OCI-LY7 (cell line): ENCODE measurements at regions of chr11 and their contacts with region 1.

Region 1: DNA sequence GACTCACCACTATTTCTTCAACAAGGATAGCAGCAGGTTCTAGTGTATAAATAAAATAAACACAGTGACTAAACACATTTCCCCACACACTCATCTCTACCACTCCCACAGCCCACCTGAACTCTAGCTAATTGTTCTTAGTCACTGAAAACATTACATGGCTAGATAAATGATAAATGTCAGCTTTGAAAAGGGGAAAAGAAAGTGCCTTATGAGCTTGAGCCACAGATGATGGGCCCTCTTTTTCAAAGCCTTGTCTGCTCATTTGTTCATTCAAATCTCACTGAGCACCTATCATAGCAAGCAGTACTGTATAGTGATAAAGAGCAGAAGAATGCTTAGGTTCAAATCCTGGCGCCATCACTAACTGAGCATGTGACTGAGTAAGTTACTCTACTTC is 58.3 kb downstream of the SIK3 start:
- DNase-seq: peak; percentile 18
- H3K4me3 ChIP-seq: no peak overlapping the region
- H3K27ac ChIP-seq: no peak overlapping the region
- H3K4me1 ChIP-seq: peaks cover 45% of the 10 kb centered on the region
- CTCF ChIP-seq: no peak

Region 2: DNA sequence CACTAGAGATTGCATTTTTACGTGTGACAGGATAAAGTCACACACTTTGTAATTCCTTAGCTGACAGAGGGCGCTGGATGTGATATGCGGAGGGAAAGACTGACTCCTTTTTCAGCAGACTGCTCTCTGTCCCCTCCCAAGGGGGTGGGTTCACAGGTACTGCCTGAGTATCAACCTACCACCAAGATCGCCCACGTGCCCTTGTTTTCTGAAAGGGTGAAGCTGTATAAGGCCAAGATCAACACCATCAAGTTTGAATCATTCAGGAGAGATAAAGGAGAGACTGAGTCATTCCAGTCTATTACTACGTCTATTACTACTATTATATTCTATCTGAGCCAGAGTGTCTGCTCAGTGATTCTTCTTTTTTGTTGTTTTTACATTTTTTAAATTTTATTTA is 297.8 kb before region 1 on chr11:
- CTCF ChIA-PET with region 1: no interaction called
- POLR2A ChIA-PET with region 1: no interaction called
- intact Hi-C with region 1: no loop called
- DNase-seq: no peak
- H3K4me3 ChIP-seq: no peak overlapping the region
- H3K27ac ChIP-seq: no peak overlapping the region
- H3K4me1 ChIP-seq: peaks cover 9% of the 10 kb centered on the region
- CTCF ChIP-seq: no peak

Region 3: DNA sequence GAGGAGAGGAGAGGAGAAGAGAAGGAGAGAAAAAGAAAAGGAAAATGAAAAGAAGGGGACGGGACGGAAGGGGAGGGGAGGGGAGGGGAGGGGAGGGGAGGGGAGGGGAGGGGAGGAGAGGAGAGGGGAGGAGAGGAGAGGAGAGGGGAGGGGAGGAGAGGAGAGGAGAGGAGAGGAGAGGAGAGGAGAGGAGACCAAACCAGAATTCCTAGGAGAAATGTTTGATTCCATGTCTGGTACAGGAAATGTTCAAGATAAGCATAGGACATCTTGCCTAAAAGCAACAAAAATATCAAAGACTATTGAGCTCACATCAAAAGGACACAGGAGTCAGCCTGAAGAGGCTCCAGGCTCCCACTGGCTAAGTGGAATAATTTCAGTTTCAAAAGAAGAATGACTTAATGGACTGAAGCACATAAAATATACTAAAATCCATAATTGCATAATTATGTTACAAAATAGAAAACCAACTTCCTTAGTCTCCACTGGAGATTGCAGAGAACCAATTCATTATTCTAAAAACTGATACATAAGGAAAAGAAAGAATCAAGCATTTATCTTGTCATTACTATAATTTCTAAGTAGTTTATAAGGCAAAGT is 101.3 kb before region 1 on chr11:
- CTCF ChIA-PET with region 1: no interaction called
- POLR2A ChIA-PET with region 1: no interaction called
- intact Hi-C with region 1: no loop called
- DNase-seq: no peak
- H3K4me3 ChIP-seq: no peak overlapping the region
- H3K27ac ChIP-seq: no peak overlapping the region
- H3K4me1 ChIP-seq: no peaks in the 10 kb centered on the region
- CTCF ChIP-seq: no peak

Region 4: GRCh38 chr11:117052196-117053149 is 12.6 kb after region 1 on chr11:
- CTCF ChIA-PET with region 1: no interaction called
- POLR2A ChIA-PET with region 1: interaction called, 18 read pairs
- intact Hi-C with region 1: no loop called
- DNase-seq: no peak
- H3K4me3 ChIP-seq: no peak overlapping the region
- H3K27ac ChIP-seq: no peak overlapping the region
- H3K4me1 ChIP-seq: no peaks in the 10 kb centered on the region
- CTCF ChIP-seq: no peak

Region 5: DNA sequence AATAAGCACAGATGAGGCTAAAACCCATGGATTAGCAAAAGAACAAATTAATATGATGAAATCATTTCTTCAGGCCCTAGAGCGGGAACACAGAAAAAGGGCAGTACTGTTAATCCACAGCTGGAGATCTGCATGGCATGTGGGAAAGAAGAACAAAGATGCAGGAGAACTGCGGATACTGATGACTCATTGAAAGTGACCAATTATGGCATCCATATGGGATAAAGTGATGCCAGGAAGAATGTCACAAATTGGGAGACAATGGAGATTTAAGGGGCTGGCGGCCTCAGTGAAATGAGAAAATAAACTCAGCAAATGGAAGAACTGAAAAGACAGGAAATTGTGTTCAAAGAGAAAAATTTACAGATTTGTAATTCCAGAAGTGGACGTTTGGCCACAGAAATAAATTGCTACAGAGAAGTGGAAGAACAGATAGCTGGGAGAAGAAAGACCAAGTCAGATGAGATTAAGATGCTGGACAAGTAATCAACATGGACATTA is 18.9 kb after region 1 on chr11:
- CTCF ChIA-PET with region 1: interaction called, 4 read pairs
- POLR2A ChIA-PET with region 1: interaction called, 11 read pairs
- intact Hi-C with region 1: no loop called
- DNase-seq: no peak
- H3K4me3 ChIP-seq: no peak overlapping the region
- H3K27ac ChIP-seq: no peak overlapping the region
- H3K4me1 ChIP-seq: peaks cover 16% of the 10 kb centered on the region
- CTCF ChIP-seq: no peak

Region 6: DNA sequence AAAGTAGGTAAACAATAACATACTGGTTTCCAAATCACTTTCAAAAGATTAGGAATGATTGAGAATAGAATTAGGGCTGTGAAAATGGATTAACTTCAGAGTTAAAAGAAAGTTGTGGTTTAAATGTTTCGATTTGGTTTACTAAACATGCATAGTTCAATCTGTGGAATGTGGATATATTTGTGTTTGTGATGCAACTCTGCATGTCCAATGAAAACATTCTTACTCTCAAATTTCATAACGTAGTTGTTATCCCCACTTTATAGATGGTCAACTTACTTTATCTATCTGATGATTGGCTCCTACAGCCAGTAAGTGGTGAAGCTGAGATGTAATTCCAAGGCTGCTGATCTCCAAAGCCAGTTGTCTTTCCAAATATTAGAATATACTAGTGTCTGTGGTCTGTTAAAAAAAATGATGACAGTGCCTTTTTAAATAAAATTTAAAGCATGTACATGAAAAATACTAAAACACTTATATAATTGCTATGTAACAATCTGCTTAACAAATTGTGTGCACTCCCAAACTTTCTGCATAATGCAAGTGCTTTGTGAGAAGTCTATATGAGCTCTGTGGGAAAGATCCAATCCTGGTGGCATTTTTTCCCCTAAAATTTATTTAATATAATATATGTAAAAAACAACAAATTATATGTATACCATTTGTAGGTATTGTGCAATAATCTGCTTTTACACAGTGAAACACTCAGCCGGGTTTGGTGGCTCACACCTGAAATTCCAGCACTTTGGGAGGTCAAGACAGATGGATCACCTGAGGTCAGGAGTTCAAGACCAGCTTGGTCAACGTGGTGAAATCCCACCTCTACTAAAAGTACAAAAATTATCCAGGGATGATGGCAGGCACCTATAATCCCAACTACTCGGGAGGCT is 68.0 kb after region 1 on chr11:
- CTCF ChIA-PET with region 1: no interaction called
- POLR2A ChIA-PET with region 1: no interaction called
- intact Hi-C with region 1: no loop called
- DNase-seq: no peak
- H3K4me3 ChIP-seq: no peak overlapping the region
- H3K27ac ChIP-seq: no peak overlapping the region
- H3K4me1 ChIP-seq: peaks cover 9% of the 10 kb centered on the region
- CTCF ChIP-seq: no peak